Psoas muscle (tissue), 8 donors: ENCODE measurements at regions of chr15 and their contacts with region 1.

Region 1: DNA sequence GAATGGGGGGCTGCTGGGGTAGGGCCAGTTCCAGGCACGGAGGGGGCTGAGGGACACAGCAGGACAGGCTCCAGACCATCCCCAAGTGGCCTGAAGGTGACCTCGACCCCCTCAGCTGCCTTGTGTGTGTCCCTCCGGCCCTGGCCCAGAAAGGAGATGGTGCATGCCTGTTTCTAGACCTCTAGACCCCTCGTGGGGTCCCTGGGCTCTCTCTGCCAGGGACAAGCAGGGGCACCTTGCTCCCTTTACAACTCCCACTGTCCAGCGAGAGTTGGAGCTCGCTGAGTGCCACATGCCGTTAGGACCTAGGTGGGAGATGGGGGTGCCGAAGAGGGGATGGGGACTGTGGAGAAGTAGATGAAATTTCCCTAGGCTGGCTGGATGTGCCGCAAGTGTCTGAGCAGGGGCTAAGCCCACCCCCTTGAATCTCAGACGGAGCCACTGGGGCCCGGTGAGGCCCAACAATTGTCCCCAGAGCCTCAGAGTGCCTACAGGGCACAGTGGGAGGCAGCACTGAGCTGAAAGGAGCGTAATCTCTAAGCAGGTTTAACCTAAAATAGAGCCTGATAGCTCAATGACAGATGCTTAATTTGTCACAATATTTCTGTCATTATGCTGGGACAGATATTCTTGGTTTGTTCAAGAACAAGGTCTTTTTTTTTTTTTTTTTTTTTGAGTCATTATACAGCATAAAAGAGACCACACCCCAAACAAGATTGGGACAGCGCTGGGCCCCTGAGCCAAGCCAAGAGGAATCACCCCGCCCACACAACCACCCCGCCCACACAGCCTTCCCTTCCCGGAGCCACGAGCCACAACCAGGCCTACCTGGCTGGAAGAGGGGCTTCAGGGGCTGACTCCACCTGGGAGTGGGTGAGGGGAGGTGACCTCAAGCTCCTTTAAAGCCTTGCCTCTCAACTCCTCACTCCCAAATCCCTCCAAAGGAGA is 23.6 kb upstream of the KLF13 start:
- DNase-seq: peak; percentile 25 to 72
- ATAC-seq: peak in 2 of 4 donors; percentile 34 to 60
- H3K4me3 ChIP-seq: no peak overlapping the region
- H3K27ac ChIP-seq: no peak overlapping the region
- H3K4me1 ChIP-seq: no peaks in the 10 kb centered on the region
- H3K27me3 ChIP-seq: peaks cover 0 to 12% (median 2%) of the 10 kb centered on the region in 3 donors
- CTCF ChIP-seq: no peak

Region 2: DNA sequence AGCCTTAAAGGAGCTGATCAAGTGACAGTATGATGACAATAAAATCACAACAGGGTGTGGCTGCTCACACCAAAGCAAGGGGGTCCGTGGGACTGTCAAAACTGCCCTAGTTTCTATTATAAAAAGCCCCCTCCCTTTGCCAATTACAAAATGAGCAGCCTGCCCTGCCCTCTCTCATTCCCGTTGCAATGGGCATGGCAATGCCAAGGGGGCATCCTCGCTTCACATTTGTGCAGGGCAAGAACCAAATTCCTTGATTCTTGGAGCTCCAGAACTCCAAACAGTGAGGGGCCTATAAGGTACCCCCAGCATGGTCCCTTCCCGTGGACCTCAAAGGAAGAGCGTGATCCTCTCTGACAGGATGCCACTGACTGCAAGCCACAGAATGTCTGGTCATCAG is 96.7 kb before region 1 on chr15:
- intact Hi-C with region 1: loop called in 1 of 2 experiments (anchors 5 kb)
- DNase-seq: no peak
- ATAC-seq: no peak
- H3K4me3 ChIP-seq: no peak overlapping the region
- H3K27ac ChIP-seq: no peak overlapping the region
- H3K4me1 ChIP-seq: no peaks in the 10 kb centered on the region
- H3K27me3 ChIP-seq: no peaks in the 10 kb centered on the region
- CTCF ChIP-seq: no peak

Region 3: DNA sequence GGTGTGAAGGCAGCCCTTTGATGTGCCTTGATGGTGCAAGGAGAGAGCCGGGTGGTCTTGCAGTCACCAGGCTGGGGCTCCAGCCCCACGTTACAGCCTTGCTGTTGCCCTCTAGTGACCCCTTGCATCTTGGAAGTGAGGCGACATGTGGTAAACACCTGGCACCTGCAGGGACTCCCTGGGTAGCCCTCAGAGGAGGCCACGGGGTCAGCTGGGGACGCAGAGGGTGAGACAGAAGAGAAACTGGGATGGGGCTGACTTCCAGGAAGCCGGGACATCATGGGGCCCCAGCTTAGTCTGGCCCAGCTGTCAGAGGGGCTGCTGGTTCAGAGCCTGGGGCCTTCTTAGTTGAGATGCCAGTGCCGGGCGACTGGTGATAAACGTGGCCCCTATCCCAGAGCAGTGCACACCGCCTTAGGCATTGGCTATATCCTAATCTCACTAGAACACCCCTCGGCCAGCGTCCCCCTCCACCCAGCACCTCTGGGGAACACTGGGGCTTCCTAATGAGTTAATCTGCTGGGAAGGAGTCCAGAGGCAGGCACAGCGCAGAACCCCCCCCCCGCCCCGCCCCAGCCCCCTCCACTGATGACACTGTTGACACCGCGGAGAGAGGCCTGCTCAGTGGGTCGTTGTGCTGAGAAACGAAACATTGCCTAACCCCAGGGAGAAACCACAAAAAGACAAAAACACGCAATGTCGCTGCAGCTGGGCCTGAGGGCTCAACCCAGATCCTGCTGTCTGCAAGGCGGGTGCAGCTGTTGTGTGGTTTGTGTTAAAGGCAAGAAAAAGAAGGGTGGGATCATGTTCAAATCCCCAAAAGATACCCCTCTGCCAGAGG is 37.0 kb before region 1 on chr15:
- intact Hi-C with region 1: loop called in 1 of 2 experiments (anchors 5 kb)
- DNase-seq: peak in 1 of 2 donors; percentile 59
- ATAC-seq: peak in 1 of 4 donors; percentile 32
- H3K4me3 ChIP-seq: no peak overlapping the region
- H3K27ac ChIP-seq: no peak overlapping the region
- H3K4me1 ChIP-seq: peaks cover 16% of the 10 kb centered on the region
- H3K27me3 ChIP-seq: no peaks in the 10 kb centered on the region
- CTCF ChIP-seq: no peak

Region 4: GRCh38 chr15:31379042-31379441 is 76.0 kb after region 1 on chr15:
- intact Hi-C with region 1: no loop called
- DNase-seq: no peak
- ATAC-seq: peak in 1 of 4 donors; percentile 14
- H3K4me3 ChIP-seq: no peak overlapping the region
- H3K27ac ChIP-seq: peak overlapping the region; percentile 38
- H3K4me1 ChIP-seq: peaks cover 22% of the 10 kb centered on the region
- H3K27me3 ChIP-seq: no peaks in the 10 kb centered on the region
- CTCF ChIP-seq: no peak